PC-9 (cell line): ENCODE measurements at regions of chr17 and their contacts with region 1.

Region 1: DNA sequence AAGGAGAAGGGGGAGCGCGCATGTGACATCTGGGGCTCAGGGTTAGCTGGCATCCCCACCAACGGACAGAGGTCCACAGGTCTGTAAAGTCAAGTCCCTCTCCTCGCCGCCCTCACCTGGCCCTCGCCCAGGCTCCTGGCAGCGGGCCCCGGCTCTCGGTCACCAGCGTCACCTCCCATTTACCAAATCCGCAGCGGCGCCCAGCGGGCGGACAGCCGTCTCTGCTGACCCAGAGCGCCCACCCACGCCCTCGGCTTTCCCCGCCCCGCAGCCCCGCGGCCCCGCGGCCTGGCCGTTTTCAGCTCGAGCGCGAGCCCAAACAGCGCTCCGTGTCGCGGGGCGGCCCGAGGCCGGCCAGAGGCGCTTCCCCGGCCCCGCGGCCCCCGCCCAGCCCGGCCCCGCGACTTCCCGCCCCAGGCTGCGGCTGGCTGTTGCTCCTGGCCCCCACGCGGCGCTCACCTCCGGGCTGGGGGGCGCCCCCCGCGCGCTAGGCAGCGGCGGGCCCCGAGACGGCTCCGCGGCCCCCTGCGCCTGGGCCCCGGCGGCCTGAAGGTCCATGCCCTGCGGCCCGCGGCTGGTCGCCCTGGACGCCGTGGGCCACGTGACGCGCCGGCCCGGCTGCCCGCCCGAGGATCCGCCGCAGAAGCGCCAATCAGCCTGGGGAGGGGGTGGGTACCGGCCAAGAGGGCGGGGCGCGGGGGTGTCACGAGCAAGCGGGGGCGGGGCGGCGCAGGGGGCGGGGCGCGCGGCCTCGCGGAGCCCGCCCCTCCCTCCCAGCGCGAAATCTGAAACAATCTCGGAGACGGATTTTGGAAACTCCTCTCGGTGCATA is at the start of gene COPRS:
- DNase-seq: peak; percentile 54 to 83
- H3K4me3 ChIP-seq: peak within 1 kb of the TSS; percentile 72
- H3K27ac ChIP-seq: no peak within 1 kb of the TSS
- H3K4me1 ChIP-seq: peaks cover 20% of the 10 kb centered on the region
- H3K27me3 ChIP-seq: no peaks in the 10 kb centered on the region
- CTCF ChIP-seq: no peak
- total RNA-seq, gene COPRS: 48.3 and 56.8 TPM in 2 replicates

Region 2: GRCh38 chr17:31882571-31882970 is 23.7 kb after region 1 on chr17:
- CTCF ChIA-PET with region 1: no interaction called
- POLR2A ChIA-PET with region 1: no interaction called
- intact Hi-C with region 1: no loop called
- DNase-seq: no peak
- H3K4me3 ChIP-seq: no peak overlapping the region
- H3K27ac ChIP-seq: no peak overlapping the region
- H3K4me1 ChIP-seq: no peaks in the 10 kb centered on the region
- H3K27me3 ChIP-seq: no peaks in the 10 kb centered on the region
- CTCF ChIP-seq: no peak

Region 3: GRCh38 chr17:33038740-33039139 is 1179.9 kb after region 1 on chr17:
- CTCF ChIA-PET with region 1: no interaction called
- POLR2A ChIA-PET with region 1: interaction called, 11 read pairs
- intact Hi-C with region 1: no loop called
- DNase-seq: no peak
- H3K4me3 ChIP-seq: no peak overlapping the region
- H3K27ac ChIP-seq: no peak overlapping the region
- H3K4me1 ChIP-seq: no peaks in the 10 kb centered on the region
- H3K27me3 ChIP-seq: peaks cover 6% of the 10 kb centered on the region
- CTCF ChIP-seq: peak; percentile 51